Activated CD4-positive, alpha-beta T cell treated with anti-CD3 and anti-CD28 coated beads, Interleukin-2, amount 10 ng/mL, durations not matched to agents 7 days and 5 days (primary cell): ENCODE measurements at regions of chr15 and their contacts with region 1.

Region 1: DNA sequence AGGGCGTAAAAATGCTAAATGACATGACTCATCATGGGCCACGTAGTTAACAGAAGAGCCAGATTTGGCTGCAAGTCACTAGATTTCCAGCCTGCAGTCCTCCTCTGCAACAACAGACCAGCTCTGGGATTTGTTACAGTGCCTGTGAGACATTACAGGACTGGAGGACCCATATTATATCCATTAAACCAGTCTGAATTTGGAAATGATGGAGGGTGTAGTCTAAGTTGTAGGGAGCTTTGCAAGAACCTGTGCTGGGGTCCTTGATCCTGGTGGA is 10.8 kb downstream of the ZNF774 start:
- DNase-seq: no peak
- H3K4me3 Mint-ChIP-seq: no peak overlapping the region
- H3K27ac Mint-ChIP-seq: no peak overlapping the region
- H3K4me1 Mint-ChIP-seq: peaks cover 41% of the 10 kb centered on the region
- H3K27me3 Mint-ChIP-seq: no peaks in the 10 kb centered on the region

Region 2: DNA sequence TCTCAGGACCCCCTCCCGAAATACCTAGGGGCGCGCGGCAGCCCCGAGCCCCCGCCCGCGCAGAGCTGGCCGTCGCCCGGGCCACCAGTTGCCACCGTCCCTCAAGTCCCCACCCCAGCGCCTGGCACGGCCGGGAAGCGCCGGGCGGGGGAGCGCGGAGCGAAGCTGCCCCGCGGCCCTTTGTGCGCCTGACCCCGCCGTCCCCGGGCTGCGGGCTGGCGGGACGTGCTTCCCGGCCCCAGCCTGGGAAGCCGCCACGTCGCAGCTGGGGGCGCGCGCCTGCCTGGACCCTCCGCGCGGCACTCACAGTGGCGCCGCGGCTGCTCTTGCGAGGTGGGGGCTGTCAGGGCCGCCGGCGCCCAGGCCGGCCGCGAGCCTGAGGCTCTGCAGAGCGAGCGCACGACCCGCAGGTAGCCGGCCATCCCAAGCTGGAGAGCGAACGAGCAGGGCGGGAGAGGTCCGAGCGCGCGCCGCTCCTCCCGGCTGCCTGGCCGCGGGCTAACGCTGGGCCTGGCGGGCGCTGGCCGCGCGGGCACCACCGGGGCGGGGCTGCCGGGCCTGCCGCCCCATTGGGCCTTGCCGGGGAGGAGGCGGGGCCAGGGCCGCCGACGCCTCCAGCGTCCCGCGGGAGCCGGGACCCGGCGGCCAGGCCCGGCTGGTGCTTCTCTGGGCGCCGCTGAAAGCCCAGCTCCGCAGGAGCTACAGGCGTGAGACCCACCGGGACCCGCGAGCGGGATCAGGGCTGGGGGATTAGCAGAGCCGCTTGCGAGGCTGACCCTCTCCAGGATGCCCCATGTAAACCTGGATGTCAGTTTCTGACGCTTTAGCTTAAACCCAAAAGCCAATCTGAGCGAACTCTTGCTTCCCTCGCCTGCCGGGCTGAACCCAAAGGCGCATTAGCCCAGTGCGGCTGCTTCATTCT is 260.6 kb before region 1 on chr15 and contains the start of gene IDH2:
- CTCF ChIA-PET with region 1: no interaction called
- POLR2A ChIA-PET with region 1: no interaction called
- DNase-seq: peak; percentile 74
- H3K4me3 Mint-ChIP-seq: peak within 1 kb of the TSS; percentile 75
- H3K27ac Mint-ChIP-seq: peak within 1 kb of the TSS; percentile 96
- H3K4me1 Mint-ChIP-seq: peaks cover 54% of the 10 kb centered on the region
- H3K27me3 Mint-ChIP-seq: peaks cover 3% of the 10 kb centered on the region
- total RNA-seq, gene IDH2: 332 to 349 TPM

Region 3: DNA sequence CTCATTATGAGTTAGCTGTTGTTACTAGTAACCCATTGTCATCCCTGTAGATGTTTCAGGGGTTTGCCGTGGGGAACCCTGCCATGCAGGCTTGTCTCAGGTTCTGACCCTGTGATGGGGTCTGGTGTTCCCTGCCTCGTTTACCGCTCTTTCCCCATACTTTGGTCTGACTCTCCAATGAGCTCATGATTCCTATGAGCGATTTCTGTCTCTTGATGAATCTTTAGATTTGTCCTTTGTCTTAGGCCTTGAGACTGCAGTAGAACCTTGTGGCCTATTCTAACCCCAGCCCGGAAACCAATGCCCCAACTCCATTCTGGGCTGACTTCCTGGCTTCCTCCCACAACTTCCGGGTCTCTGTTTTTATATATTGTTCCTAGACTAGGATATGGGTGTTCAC is 13.9 kb after region 1 on chr15:
- CTCF ChIA-PET with region 1: interaction called, 30 read pairs
- POLR2A ChIA-PET with region 1: interaction called, 3 read pairs
- DNase-seq: peak; percentile 82
- H3K4me3 Mint-ChIP-seq: peak overlapping the region; percentile 48
- H3K27ac Mint-ChIP-seq: peak overlapping the region; percentile 89
- H3K4me1 Mint-ChIP-seq: peaks cover 39% of the 10 kb centered on the region
- H3K27me3 Mint-ChIP-seq: no peaks in the 10 kb centered on the region